ENCODE measurements at regions of chr5 and their contacts with region 1.

Region 1: DNA sequence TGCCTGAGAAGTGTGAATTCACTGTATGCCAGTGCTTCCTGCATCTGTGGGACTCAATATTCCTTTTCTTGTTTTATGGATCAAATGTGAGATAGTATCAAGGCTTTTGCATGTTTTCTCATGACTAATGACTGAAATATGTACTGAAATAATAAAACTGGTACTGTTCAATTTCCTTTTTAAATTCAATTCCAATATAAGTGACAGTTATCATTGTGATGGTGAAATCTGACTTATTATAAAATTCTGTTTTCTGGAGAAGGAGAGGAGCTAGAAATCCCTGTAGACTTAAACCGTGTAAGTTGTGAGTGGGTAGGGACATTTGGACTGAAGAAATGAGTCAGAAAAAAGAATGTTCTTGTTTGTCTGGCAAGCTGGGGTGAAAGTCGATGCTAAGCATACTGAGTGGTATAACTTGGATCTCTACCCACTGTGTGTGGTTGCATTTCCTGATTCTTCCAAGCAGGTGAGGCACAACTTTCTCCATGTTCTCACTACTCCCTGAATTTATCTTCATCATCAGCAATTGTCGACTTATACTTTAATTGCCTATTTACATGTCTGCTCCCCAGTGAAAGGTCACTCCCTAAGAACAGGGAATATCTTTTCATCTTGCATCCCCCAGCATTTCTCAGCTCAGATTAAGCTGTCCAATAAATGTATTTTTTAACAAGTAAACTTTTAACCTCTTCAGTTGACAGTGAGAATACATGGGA is 245.0 kb downstream of the EFNA5 start:
- DNase-seq: peak; percentile 83
- ATAC-seq: peak; percentile 86
- H3K4me3 ChIP-seq: peak overlapping the region; percentile 38; the same call in 1 of the 2 replicates
- H3K27ac ChIP-seq: peak overlapping the region; percentile 89
- H3K4me1 ChIP-seq: peaks cover 40% of the 10 kb centered on the region
- H3K27me3 ChIP-seq: no peaks in the 10 kb centered on the region
- CTCF ChIP-seq: no peak

Region 2: GRCh38 chr5:107373549-107374263 is 52.0 kb before region 1 on chr5:
- CTCF ChIA-PET with region 1: no interaction called
- POLR2A ChIA-PET with region 1: no interaction called
- intact Hi-C with region 1: no loop called
- DNase-seq: no peak
- ATAC-seq: no peak
- H3K4me3 ChIP-seq: no peak overlapping the region
- H3K27ac ChIP-seq: no peak overlapping the region
- H3K4me1 ChIP-seq: 0 out of 2 replicates have a peak, but pooled peaks cover 5% of the 10 kb centered on the region
- H3K27me3 ChIP-seq: no peaks in the 10 kb centered on the region
- CTCF ChIP-seq: no peak

Region 3: GRCh38 chr5:107476783-107477182 is 51.1 kb after region 1 on chr5:
- CTCF ChIA-PET with region 1: no interaction called
- POLR2A ChIA-PET with region 1: no interaction called
- intact Hi-C with region 1: loop called (anchors 2 kb)
- DNase-seq: no peak
- ATAC-seq: no peak
- H3K4me3 ChIP-seq: no peak overlapping the region
- H3K27ac ChIP-seq: peak overlapping the region; percentile 32; the same call in 1 of the 2 replicates
- H3K4me1 ChIP-seq: peaks cover 55% of the 10 kb centered on the region
- H3K27me3 ChIP-seq: no peaks in the 10 kb centered on the region
- CTCF ChIP-seq: no peak